Sciatic nerve (tissue), 2 donors: ENCODE measurements at regions of chr12 and their contacts with region 1.

Region 1: GRCh38 chr12:54126696-54127537 is 61.9 kb downstream of the SMUG1 start:
- DNase-seq: peak; percentile 88
- ATAC-seq: peak; percentile 93

Region 2: DNA sequence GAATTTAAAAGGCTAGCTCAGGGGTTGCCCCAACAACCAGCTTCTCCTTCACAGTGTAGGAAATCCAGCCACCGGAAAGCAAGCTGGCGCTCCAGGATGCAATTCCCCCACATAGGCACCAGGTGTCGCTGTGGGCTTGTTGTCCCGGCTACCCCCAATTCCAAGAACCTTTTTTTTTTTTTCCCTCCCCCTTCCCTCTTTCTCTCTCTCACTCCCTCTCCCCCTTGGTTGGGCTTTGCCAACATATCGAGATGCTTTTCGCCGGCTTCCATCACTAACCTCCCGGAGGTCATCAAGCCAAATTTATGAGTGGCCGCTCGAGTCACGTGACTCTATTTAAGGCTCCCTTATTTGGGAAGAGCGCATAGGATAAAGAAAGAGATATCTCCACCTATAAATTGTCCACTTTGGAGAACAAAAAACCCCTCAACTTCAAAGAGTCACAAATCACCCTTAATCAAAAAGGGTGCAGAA is 94.3 kb before region 1 on chr12 and contains the start of gene HOXC5:
- intact Hi-C with region 1: loop called (anchors 5 kb)
- DNase-seq: peak; percentile 89
- ATAC-seq: peak; percentile 51
- total RNA-seq, gene HOXC5: 5.6 TPM